Head of caudate nucleus (tissue), 42 donors: ENCODE measurements at regions of chr11 and their contacts with region 1.

Region 1: DNA sequence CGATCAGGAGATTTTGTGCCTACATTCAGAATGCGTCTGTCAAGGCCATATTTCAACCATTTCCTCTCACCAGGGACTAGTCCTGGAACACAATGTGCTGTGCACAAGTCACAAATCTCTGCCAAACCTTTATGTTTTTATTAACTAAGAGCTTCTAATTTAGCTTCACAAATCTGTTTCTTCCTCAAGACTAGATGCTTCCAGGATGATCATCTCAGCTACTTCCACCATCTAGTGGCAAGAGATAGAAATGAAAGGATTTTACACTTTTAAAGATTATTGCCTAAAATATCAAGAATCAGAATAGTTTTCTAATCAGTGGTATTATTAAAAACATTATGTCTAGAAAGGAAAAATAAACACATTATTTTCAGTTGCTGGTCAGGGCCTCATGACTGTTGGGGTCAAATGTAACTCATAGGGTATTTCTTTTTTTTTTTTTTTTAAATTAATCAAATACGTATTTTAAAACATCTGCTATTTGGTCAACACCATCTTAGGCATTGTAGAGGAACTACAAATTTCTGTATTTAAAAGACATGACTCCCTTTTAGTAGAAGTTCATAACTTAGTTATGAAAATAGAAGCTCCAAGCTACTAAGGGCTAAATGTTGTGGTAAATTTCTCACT is 1102.6 kb downstream of the DLG2 start:
- DNase-seq: peak in 1 of 42 donors; percentile 20

Region 2: DNA sequence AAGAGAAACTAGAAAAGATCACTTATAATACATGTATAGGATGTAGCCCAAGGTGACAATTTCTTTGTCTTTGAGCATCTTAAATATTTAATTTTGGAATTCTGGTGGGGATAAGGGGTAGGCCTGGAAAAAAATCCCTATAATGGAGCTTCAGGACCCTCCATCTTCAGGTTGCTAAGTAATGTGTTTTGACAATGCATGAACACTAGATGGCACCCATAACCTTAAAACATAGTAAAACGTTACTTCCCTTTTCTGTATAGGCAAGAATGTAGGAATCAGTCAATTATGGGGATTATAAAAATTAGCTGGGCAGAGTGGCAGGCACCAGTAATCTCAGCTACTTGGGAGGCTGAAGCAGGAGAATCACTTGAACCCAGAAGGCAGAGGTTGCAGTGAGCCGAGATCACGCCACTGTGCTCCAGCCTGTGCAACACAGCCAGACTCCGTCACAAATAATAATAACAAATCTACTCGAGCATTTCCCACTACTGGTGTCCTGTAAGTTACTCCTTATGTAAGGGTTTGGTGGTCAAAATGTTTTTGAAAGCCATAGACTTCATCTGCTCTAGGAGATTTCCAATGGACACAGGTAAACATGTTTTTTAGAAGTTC is 696.5 kb before region 1 on chr11:
- intact Hi-C with region 1: loop called (anchors 10 kb)
- DNase-seq: peak in 2 of 42 donors; percentile 20 to 50

Region 3: GRCh38 chr11:84398017-84398626 is 126.4 kb before region 1 on chr11:
- intact Hi-C with region 1: loop called (anchors 10 kb)
- DNase-seq: peak in 12 of 42 donors; percentile 8 to 48 (median 24)